IMR-90 (cell line): ENCODE measurements at regions of chr12 and their contacts with region 1.

Region 1: GRCh38 chr12:46556105-46556559 is 183.6 kb upstream of the SLC38A2 start:
- DNase-seq: peak; percentile 99
- ATAC-seq: peak; percentile 73
- H3K4me3 ChIP-seq: peak overlapping the region; percentile 10; the same call in 1 of the 2 replicates
- H3K27ac ChIP-seq: peak overlapping the region; percentile 97; the same call in 1 of the 2 replicates
- H3K4me1 ChIP-seq: peaks cover 15% of the 10 kb centered on the region
- H3K27me3 ChIP-seq: no peaks in the 10 kb centered on the region
- CTCF ChIP-seq: no peak
- POLR2A ChIP-seq: no peak
- RAD21 ChIP-seq: peak; percentile 26; the same call in 1 of the 2 replicates

Region 2: DNA sequence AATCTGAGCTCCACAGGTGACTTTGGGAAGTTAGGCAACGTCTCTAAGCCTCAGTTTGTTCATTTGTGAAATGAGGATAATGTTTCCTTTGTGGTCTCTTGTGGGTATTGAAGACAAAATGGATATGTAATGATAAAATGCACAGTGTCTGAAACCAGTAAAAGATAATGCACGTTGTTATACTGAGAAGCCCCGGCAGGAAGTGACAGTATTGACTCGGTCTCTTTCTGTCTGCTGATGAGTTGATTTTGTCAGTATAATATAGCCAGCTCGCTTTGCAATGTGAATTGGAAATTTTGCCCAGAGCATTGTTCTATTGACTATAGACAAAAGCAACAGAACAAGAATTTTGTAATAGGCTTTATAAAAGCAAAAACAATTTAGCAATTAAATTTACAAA is 238.1 kb before region 1 on chr12:
- CTCF ChIA-PET with region 1: no interaction called
- POLR2A ChIA-PET with region 1: no interaction called
- dilution Hi-C with region 1: no loop called
- in situ Hi-C with region 1: no loop called
- intact Hi-C with region 1: no loop called
- DNase-seq: no peak
- ATAC-seq: no peak
- H3K4me3 ChIP-seq: no peak overlapping the region
- H3K27ac ChIP-seq: no peak overlapping the region
- H3K4me1 ChIP-seq: no peaks in the 10 kb centered on the region
- H3K27me3 ChIP-seq: no peaks in the 10 kb centered on the region
- CTCF ChIP-seq: no peak
- POLR2A ChIP-seq: no peak
- RAD21 ChIP-seq: no peak

Region 3: DNA sequence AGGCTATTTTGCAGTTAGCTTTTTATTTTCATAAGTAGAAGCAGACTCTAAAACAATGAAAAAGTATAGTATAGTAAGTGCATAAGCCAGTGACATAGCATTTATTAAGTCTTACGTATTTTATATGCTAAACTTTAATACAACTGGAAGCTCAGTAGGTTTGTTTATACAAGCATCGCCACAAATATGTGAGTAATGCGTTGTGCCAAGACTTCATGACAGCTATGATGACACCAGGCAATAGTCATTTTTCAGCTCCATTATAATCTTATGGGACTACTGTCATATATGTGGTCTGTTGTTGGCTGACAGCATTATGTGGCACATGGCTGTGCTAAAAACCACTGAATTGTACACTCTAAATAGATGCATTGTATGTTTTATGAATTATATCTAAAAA is 223.9 kb before region 1 on chr12:
- CTCF ChIA-PET with region 1: no interaction called
- POLR2A ChIA-PET with region 1: no interaction called
- dilution Hi-C with region 1: no loop called
- in situ Hi-C with region 1: no loop called
- intact Hi-C with region 1: no loop called
- DNase-seq: peak; percentile 77
- ATAC-seq: peak; percentile 70
- H3K4me3 ChIP-seq: no peak overlapping the region
- H3K27ac ChIP-seq: no peak overlapping the region
- H3K4me1 ChIP-seq: no peaks in the 10 kb centered on the region
- H3K27me3 ChIP-seq: peaks cover 1% of the 10 kb centered on the region
- CTCF ChIP-seq: no peak
- POLR2A ChIP-seq: no peak
- RAD21 ChIP-seq: no peak

Region 4: GRCh38 chr12:46492471-46493351 is 63.4 kb before region 1 on chr12:
- CTCF ChIA-PET with region 1: no interaction called
- POLR2A ChIA-PET with region 1: interaction called, 3 read pairs
- dilution Hi-C with region 1: no loop called
- in situ Hi-C with region 1: no loop called
- intact Hi-C with region 1: loop called (anchors 2 kb)
- DNase-seq: peak; percentile 97
- ATAC-seq: peak; percentile 65
- H3K4me3 ChIP-seq: no peak overlapping the region
- H3K27ac ChIP-seq: peak overlapping the region; percentile 93; the same call in 1 of the 2 replicates
- H3K4me1 ChIP-seq: peaks cover 27% of the 10 kb centered on the region
- H3K27me3 ChIP-seq: no peaks in the 10 kb centered on the region
- CTCF ChIP-seq: no peak
- POLR2A ChIP-seq: no peak
- RAD21 ChIP-seq: no peak

Region 5: DNA sequence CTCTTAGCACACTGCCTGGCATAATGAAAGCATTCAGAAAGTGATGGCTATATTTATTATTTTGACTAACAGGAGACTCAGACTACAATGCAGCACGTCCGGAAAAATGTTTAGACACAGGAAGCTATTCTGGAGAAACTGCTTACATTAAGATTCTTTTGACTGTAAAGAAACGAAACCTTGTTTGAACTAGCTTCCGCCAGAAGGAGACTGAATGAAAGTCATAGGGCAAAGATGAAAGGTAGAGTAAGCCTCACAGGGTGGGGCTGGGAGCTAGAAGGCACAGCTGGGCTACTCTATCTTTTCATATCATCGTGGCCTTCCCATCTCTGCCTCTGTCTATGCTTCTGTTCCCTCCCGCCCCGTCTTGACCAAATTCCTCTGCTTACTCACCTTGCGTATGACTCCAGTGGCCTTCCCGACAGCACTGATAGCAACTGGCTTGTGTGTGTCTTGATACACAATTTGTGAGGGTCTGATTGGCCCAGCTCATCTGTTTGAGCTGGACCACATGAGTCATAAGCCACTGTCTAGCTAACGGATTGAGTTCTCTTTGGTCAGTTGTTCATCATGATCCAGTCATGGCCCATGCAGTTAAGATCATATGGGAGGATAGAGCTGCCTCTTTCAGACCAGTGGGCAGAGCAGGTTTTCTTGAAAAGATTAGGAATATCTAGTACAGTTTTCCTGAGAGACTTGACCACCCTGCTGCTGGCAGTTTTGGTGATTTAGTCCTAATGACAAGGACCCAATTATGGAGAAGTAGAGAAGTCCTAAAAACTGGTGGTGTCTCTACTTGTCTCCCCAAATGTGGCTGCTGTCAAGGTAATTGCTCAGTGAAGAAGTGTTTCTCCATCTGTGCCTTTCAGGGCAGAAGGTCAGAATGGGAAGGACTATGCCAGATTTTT is 32.0 kb before region 1 on chr12:
- CTCF ChIA-PET with region 1: interaction called, 3 read pairs
- POLR2A ChIA-PET with region 1: interaction called, 3 read pairs
- dilution Hi-C with region 1: no loop called
- in situ Hi-C with region 1: no loop called
- intact Hi-C with region 1: loop called (anchors 1 kb)
- DNase-seq: peak; percentile 100
- ATAC-seq: peak; percentile 82
- H3K4me3 ChIP-seq: peak overlapping the region; percentile 47
- H3K27ac ChIP-seq: peak overlapping the region; percentile 94
- H3K4me1 ChIP-seq: peaks cover 25% of the 10 kb centered on the region
- H3K27me3 ChIP-seq: no peaks in the 10 kb centered on the region
- CTCF ChIP-seq: no peak
- POLR2A ChIP-seq: peak; percentile 83
- RAD21 ChIP-seq: peak; percentile 21; the same call in 1 of the 2 replicates

Region 6: GRCh38 chr12:46585854-46586621 is 29.9 kb after region 1 on chr12:
- CTCF ChIA-PET with region 1: no interaction called
- POLR2A ChIA-PET with region 1: no interaction called
- dilution Hi-C with region 1: no loop called
- in situ Hi-C with region 1: no loop called
- intact Hi-C with region 1: loop called (anchors 2 kb)
- DNase-seq: peak; percentile 92
- ATAC-seq: peak; percentile 91
- H3K4me3 ChIP-seq: no peak overlapping the region
- H3K27ac ChIP-seq: peak overlapping the region; percentile 68
- H3K4me1 ChIP-seq: peaks cover 7% of the 10 kb centered on the region
- H3K27me3 ChIP-seq: no peaks in the 10 kb centered on the region
- CTCF ChIP-seq: no peak
- POLR2A ChIP-seq: no peak
- RAD21 ChIP-seq: peak; percentile 20; the same call in 1 of the 2 replicates

Region 7: GRCh38 chr12:46661110-46661845 is 105.1 kb after region 1 on chr12:
- CTCF ChIA-PET with region 1: interaction called, 6 read pairs
- POLR2A ChIA-PET with region 1: no interaction called
- dilution Hi-C with region 1: no loop called
- in situ Hi-C with region 1: no loop called
- intact Hi-C with region 1: loop called (anchors 1 kb)
- DNase-seq: peak; percentile 95
- ATAC-seq: peak; percentile 76
- H3K4me3 ChIP-seq: peak overlapping the region; percentile 14; the same call in 1 of the 2 replicates
- H3K27ac ChIP-seq: peak overlapping the region; percentile 93
- H3K4me1 ChIP-seq: peaks cover 29% of the 10 kb centered on the region
- H3K27me3 ChIP-seq: no peaks in the 10 kb centered on the region
- CTCF ChIP-seq: peak; percentile 87
- POLR2A ChIP-seq: peak; percentile 32; the same call in 1 of the 2 replicates
- RAD21 ChIP-seq: peak; percentile 84